ENCODE measurements at regions of chrX and their contacts with region 1.

Region 1: DNA sequence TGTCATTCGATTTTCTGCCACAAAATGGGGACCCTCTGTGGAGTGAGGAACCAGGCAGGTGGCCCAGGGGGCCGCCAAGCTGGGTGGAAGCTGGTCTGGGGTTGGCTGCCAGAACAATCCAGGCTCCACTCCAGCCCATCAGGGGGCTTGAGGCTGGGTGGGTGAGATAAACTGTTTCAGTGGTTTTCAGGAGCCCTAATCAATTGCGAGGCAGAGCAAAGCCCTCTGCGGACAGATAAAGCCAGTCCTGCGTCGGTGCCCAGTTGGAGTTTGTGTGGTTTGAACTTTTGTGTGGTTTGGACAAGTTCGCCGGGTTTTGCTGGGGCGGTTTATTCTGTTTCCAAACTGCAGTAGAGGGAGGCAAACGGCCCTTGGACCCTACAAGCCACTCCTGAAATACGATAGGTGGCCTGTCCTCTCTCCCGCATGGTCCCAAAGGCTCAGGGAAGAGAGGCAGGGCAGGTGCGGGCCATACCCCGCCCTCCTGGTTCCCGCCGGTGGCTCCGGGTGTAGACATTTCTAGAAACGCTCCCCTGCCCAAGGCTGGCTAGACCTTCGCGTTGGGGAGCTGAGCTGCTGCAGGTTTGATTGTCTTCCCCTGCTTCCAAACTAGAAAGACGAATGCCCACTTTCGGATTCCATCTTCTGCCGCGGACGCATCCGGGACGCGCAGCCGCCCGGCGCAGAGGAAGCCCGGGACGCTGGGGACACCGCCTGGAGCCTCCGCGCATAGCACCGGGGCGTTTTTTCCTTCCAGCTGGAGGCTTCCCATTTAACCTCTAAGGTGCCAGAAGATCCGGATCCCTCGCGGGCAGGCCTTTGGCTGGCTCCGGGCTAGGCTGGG is 169.0 kb upstream of the BCOR start:
- DNase-seq: peak; percentile 69
- H3K4me3 Mint-ChIP-seq: peak overlapping the region; percentile 70
- H3K27ac Mint-ChIP-seq: no peak overlapping the region
- H3K4me1 Mint-ChIP-seq: peaks cover 8% of the 10 kb centered on the region
- H3K27me3 Mint-ChIP-seq: no peaks in the 10 kb centered on the region

Region 2: DNA sequence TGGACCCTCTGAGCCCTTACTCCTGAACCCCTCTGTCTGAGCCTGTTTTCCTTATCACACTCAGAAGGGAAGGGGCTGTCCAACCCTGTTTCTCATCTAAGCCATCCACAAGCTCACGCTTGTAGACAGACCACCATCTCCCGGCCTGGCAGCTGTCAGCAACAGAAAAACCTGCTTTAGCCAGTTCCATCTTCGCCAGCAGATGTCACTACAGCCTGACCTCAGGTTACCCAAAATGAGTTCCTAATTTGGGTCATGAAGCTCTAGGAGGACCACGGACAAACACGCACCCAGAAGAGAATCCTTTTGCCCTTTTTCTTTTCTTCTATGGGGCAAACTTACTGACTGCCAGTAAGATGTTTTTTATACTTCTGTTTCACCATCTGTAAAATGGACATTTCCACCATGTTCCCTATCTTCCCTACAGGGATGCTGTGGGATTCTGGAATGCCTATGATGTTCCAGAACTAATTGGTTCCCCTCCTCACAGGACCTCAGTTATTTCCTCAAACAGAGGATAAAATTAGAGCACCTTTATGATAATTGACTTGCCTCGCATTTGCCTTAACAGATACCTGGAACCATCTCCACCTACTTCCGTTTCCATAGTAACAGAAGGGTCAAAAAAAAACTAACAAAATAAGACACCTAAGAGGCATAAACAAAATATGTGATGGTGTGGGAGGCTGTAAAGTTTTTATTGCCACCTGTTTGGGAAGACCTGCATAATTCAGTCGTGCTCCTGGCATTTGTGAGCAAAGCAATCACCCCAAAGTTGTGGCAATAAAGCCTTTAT is 614.2 kb before region 1 on chrX:
- CTCF ChIA-PET with region 1: no interaction called
- intact Hi-C with region 1: loop called (anchors 10 kb)
- DNase-seq: peak; percentile 51
- H3K4me3 Mint-ChIP-seq: no peak overlapping the region
- H3K27ac Mint-ChIP-seq: no peak overlapping the region
- H3K4me1 Mint-ChIP-seq: peaks cover 13% of the 10 kb centered on the region
- H3K27me3 Mint-ChIP-seq: no peaks in the 10 kb centered on the region

Region 3: DNA sequence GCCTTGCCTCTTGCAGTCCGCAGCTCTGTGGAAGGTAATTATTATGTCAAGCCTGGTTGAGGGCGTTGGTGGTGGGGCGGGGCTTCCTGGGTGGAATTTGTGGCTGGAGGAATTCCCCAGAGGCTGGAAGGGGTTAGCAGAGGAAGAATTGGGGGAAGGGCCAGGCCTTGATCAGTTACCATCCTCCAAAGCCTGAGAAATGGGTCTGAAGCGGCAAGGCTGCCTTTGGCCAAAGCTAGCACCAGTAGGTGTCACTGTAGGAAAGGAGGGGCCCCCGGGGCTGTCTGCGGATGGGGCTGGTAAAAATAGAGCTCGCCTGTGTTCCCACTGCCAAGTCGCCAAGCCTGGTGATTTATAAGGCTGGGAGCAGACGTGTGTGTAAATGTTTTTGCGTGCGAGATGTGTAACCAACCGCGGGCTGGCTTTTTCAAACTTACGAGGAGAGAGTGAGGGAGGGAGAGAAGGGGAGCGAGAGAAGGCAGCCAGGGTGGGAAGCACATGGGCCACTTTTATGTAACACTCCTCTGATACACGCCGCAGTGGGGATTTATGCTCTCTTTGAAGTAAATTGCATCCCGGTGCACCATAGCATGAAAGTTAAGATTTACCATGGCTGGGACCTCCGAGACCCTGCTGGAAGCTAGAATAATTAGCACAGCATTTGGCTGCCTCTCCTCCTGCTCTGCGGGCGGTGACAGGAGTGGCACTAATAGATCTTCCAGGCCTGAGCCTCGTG is 535.9 kb before region 1 on chrX:
- CTCF ChIA-PET with region 1: interaction called, 7 read pairs
- intact Hi-C with region 1: loop called (anchors 2 kb)
- DNase-seq: peak; percentile 75
- H3K4me3 Mint-ChIP-seq: peak overlapping the region; percentile 45
- H3K27ac Mint-ChIP-seq: no peak overlapping the region
- H3K4me1 Mint-ChIP-seq: peaks cover 17% of the 10 kb centered on the region
- H3K27me3 Mint-ChIP-seq: no peaks in the 10 kb centered on the region

Region 4: GRCh38 chrX:40013266-40014195 is 253.2 kb before region 1 on chrX:
- CTCF ChIA-PET with region 1: no interaction called
- intact Hi-C with region 1: loop called (anchors 10 kb)
- DNase-seq: peak; percentile 55
- H3K4me3 Mint-ChIP-seq: peak overlapping the region; percentile 69
- H3K27ac Mint-ChIP-seq: peak overlapping the region; percentile 63
- H3K4me1 Mint-ChIP-seq: peaks cover 26% of the 10 kb centered on the region
- H3K27me3 Mint-ChIP-seq: peaks cover 24% of the 10 kb centered on the region

Region 5: DNA sequence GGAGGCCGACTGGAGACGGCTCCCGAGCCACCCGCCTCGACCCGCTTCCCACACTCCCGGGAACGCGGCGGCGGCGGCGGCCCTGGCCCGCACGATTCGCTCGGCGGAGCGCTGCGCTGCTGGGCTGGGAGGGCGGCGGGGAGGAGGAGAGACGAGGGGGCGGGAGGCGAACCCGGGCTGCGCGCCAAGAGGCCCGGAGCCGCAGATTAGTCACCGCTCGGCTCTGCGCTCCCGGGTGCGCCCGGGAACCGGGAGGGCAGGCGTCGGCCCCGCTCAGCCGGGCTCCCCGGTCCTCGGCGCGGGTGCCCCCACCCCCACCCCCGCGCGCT is 157.8 kb before region 1 on chrX:
- CTCF ChIA-PET with region 1: no interaction called
- intact Hi-C with region 1: loop called (anchors 5 kb)
- DNase-seq: peak; percentile 71
- H3K4me3 Mint-ChIP-seq: peak overlapping the region; percentile 50
- H3K27ac Mint-ChIP-seq: no peak overlapping the region
- H3K4me1 Mint-ChIP-seq: peaks cover 8% of the 10 kb centered on the region
- H3K27me3 Mint-ChIP-seq: peaks cover 2% of the 10 kb centered on the region

Region 6: GRCh38 chrX:40303256-40304077 is 36.8 kb after region 1 on chrX:
- CTCF ChIA-PET with region 1: no interaction called
- intact Hi-C with region 1: no loop called
- DNase-seq: peak; percentile 31
- H3K4me3 Mint-ChIP-seq: no peak overlapping the region
- H3K27ac Mint-ChIP-seq: no peak overlapping the region
- H3K4me1 Mint-ChIP-seq: peaks cover 9% of the 10 kb centered on the region
- H3K27me3 Mint-ChIP-seq: no peaks in the 10 kb centered on the region

Region 7: GRCh38 chrX:40468033-40468846 is 201.5 kb after region 1 on chrX:
- CTCF ChIA-PET with region 1: no interaction called
- intact Hi-C with region 1: loop called (anchors 5 kb)
- DNase-seq: peak; percentile 79
- H3K4me3 Mint-ChIP-seq: no peak overlapping the region
- H3K27ac Mint-ChIP-seq: peak overlapping the region; percentile 61
- H3K4me1 Mint-ChIP-seq: peaks cover 36% of the 10 kb centered on the region
- H3K27me3 Mint-ChIP-seq: no peaks in the 10 kb centered on the region